ENCODE measurements at regions of chr4 and their contacts with region 1.

Region 1: DNA sequence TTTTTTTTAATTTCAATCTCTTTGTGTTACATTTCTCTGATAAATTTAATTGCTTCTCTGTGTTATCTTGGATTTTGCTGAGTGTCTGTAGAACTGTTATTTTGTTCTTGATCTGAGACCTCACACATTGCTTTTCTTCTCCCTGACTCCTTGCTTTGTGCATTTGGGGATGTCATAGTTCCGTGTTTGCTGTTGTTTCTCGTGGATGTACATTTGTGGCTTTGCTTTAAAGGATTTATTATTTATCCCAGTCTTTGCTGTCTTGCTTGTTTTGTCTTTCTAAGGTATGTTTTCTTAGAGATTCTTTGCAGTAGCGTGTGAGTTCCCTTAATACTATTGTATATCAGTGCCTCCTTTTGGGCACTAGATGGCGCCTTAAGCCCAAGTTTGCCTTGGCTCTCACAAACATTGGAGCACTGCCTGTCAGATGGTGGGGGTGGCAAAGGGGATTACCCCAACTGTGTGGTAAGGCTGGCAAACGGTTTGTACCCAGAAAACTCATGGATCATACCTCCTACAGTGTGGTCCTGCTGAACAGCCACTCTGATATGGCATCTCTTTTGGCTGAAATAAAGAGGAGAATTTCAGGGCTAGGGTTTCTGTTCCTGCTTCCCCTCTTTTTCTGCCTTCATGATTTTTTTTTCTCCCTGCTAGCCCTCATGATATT is 96.4 kb downstream of the PGRMC2 start:
- DNase-seq: no peak
- H3K4me3 ChIP-seq: no peak overlapping the region
- H3K27ac ChIP-seq: no peak overlapping the region
- H3K4me1 ChIP-seq: peaks cover 0 to 11% (median 5%) of the 10 kb centered on the region in 4 donors
- H3K27me3 ChIP-seq: no peaks in the 10 kb centered on the region
- CTCF ChIP-seq: peak; percentile 78 to 89 (median 86)
- EP300 ChIP-seq: no peak
- POLR2A ChIP-seq: no peak

Region 2: GRCh38 chr4:127055357-127055756 is 1135.9 kb before region 1 on chr4:
- intact Hi-C with region 1: no loop called
- DNase-seq: no peak
- H3K4me3 ChIP-seq: no peak overlapping the region
- H3K27ac ChIP-seq: no peak overlapping the region
- H3K4me1 ChIP-seq: no peaks in the 10 kb centered on the region
- H3K27me3 ChIP-seq: no peaks in the 10 kb centered on the region
- CTCF ChIP-seq: no peak
- EP300 ChIP-seq: no peak
- POLR2A ChIP-seq: no peak

Region 3: GRCh38 chr4:128275346-128275745 is 84.1 kb after region 1 on chr4:
- intact Hi-C with region 1: loop called (anchors 10 kb)
- DNase-seq: no peak
- H3K4me3 ChIP-seq: no peak overlapping the region
- H3K27ac ChIP-seq: no peak overlapping the region
- H3K4me1 ChIP-seq: peaks cover 0 to 23% (median 18%) of the 10 kb centered on the region in 4 donors
- H3K27me3 ChIP-seq: no peaks in the 10 kb centered on the region
- CTCF ChIP-seq: no peak
- EP300 ChIP-seq: no peak
- POLR2A ChIP-seq: no peak